ENCODE measurements at regions of chr5 and their contacts with region 1.

Region 1: DNA sequence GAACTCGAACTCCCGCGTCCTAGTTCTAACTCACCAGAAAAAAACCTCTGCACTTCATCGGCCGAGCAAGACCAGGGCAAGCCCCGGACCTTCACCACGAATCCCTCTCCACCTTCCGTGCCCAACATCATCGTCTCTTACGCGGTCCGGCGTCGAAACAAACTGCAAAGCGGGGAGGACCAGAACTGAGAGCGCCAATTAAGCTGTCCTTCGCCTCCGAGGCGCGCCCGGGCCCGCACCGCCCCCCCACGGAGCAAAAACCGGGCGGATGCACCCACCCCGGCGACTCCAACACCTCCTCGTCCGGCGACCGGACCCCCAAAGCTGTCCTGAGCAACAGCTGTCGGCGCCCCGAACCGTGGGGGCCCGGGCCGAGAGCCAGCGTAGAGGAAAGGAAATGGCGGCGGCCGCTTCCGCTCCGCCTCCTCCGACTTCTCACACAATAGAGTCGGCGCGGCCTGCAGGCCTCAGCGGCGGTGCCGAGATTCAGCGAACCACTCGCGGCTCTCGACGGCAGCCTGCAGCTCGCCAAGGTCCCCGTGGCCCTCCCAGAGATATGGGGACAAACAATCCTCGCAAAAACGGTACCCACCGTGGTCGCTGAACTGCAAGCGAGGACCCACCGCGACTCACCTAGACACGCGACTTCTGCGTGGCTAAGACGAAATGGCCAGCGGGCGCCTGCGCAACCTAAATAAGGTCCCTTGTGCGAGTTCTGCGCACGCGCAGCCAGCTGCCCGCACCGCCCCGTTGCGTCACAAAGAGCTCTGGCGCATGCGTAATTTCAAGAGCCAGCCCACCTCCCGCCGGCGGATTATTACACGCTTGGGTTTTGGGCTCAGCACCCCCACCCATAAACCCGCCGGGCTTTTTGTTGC is at the start of gene HNRNPH1:
- DNase-seq: peak; percentile 97 to 100 (median 99)
- H3K4me3 ChIP-seq: peak within 1 kb of the TSS; percentile 73
- H3K4me3 Mint-ChIP-seq: peak within 1 kb of the TSS; percentile 90 to 99 (median 97)
- H3K27ac ChIP-seq: peak within 1 kb of the TSS; percentile 97
- H3K27ac Mint-ChIP-seq: peak within 1 kb of the TSS; percentile 95 to 100 (median 99)
- H3K4me1 ChIP-seq: peaks cover 50% of the 10 kb centered on the region
- H3K4me1 Mint-ChIP-seq: peaks cover 50 to 57% (median 51%) of the 10 kb centered on the region in 3 donors
- H3K27me3 ChIP-seq: no peaks in the 10 kb centered on the region
- H3K27me3 Mint-ChIP-seq: peaks cover 0 to 14% of the 10 kb centered on the region in 2 donors
- total RNA-seq, gene HNRNPH1: 929 to 961 TPM

Region 2: DNA sequence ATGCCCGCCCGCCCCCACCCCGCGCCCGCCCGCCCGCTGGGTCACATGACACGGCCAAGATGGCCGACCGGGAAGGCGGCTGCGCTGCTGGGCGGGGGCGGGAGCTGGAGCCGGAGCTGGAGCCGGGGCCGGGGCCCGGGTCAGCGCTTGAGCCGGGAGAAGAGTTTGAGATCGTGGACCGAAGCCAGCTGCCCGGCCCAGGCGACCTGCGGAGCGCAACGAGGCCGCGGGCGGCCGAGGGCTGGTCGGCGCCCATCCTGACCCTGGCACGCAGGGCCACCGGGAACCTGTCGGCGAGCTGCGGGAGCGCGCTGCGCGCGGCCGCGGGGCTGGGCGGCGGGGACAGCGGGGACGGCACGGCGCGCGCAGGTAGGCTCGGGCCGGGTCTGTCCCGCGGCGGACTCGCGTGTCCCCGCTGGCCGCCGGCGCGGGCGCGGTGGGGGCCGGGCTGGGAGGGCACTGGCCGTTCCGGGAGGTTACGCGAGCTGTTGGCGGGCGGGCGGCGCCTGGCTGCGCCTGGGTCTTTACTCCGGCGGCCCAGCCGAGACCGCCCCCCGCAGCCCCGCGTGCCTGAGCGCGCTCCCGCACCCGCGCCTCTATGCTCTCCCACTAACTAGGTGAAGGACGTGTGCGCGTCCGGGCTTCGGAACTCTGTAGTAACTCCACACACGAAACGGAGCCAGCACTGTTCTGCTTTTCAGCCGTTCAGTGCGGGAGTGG is 72.6 kb before region 1 on chr5 and contains the start of gene RUFY1:
- CTCF ChIA-PET with region 1: interaction called, 7 read pairs
- POLR2A ChIA-PET with region 1: interaction called, 49 read pairs
- DNase-seq: peak; percentile 71 to 89 (median 85)
- H3K4me3 ChIP-seq: peak within 1 kb of the TSS; percentile 87
- H3K4me3 Mint-ChIP-seq: peak within 1 kb of the TSS; percentile 95 to 99 (median 97)
- H3K27ac ChIP-seq: peak within 1 kb of the TSS; percentile 76
- H3K27ac Mint-ChIP-seq: peak within 1 kb of the TSS; percentile 93 to 98 (median 96)
- H3K4me1 ChIP-seq: peaks cover 21% of the 10 kb centered on the region
- H3K4me1 Mint-ChIP-seq: peaks cover 26 to 46% (median 29%) of the 10 kb centered on the region in 3 donors
- H3K27me3 ChIP-seq: no peaks in the 10 kb centered on the region
- H3K27me3 Mint-ChIP-seq: no peaks in the 10 kb centered on the region
- total RNA-seq, gene RUFY1: 40.4 to 41.9 TPM

Region 3: GRCh38 chr5:179608131-179608581 is 15.1 kb before region 1 on chr5:
- CTCF ChIA-PET with region 1: interaction called, 27 read pairs
- POLR2A ChIA-PET with region 1: interaction called, 51 read pairs
- DNase-seq: peak in 2 of 5 donors; percentile 19 to 53
- H3K4me3 ChIP-seq: no peak overlapping the region
- H3K4me3 Mint-ChIP-seq: peak overlapping the region in 3 of 7 donors; percentile 16 to 65 (median 19)
- H3K27ac ChIP-seq: no peak overlapping the region
- H3K27ac Mint-ChIP-seq: peak overlapping the region; percentile 33 to 97 (median 67)
- H3K4me1 ChIP-seq: peaks cover 16% of the 10 kb centered on the region
- H3K4me1 Mint-ChIP-seq: peaks cover 30 to 47% (median 43%) of the 10 kb centered on the region in 3 donors
- H3K27me3 ChIP-seq: no peaks in the 10 kb centered on the region
- H3K27me3 Mint-ChIP-seq: no peaks in the 10 kb centered on the region

Region 4: GRCh38 chr5:179697993-179698934 is 75.0 kb after region 1 on chr5:
- CTCF ChIA-PET with region 1: no interaction called
- POLR2A ChIA-PET with region 1: interaction called, 13 read pairs
- DNase-seq: peak; percentile 97 to 99 (median 99)
- H3K4me3 ChIP-seq: peak overlapping the region; percentile 90
- H3K4me3 Mint-ChIP-seq: peak overlapping the region; percentile 95 to 99 (median 96)
- H3K27ac ChIP-seq: peak overlapping the region; percentile 97
- H3K27ac Mint-ChIP-seq: peak overlapping the region; percentile 98 to 100 (median 99)
- H3K4me1 ChIP-seq: peaks cover 37% of the 10 kb centered on the region
- H3K4me1 Mint-ChIP-seq: peaks cover 34 to 55% (median 55%) of the 10 kb centered on the region in 3 donors
- H3K27me3 ChIP-seq: no peaks in the 10 kb centered on the region
- H3K27me3 Mint-ChIP-seq: no peaks in the 10 kb centered on the region

Region 5: GRCh38 chr5:179821581-179822432 is 198.6 kb after region 1 on chr5:
- CTCF ChIA-PET with region 1: interaction called, 4 read pairs
- POLR2A ChIA-PET with region 1: interaction called, 13 read pairs
- DNase-seq: peak; percentile 85 to 94 (median 88)
- H3K4me3 ChIP-seq: peak overlapping the region; percentile 83
- H3K4me3 Mint-ChIP-seq: peak overlapping the region; percentile 94 to 99 (median 98)
- H3K27ac ChIP-seq: peak overlapping the region; percentile 96
- H3K27ac Mint-ChIP-seq: peak overlapping the region; percentile 93 to 100 (median 98)
- H3K4me1 ChIP-seq: peaks cover 36% of the 10 kb centered on the region
- H3K4me1 Mint-ChIP-seq: peaks cover 40 to 71% (median 47%) of the 10 kb centered on the region in 3 donors
- H3K27me3 ChIP-seq: no peaks in the 10 kb centered on the region
- H3K27me3 Mint-ChIP-seq: peaks cover 0 to 8% of the 10 kb centered on the region in 2 donors

Measured in CD8-positive, alpha-beta memory T cell (primary cell).